ENCODE measurements at regions of chr16 and their contacts with region 1.

Region 1: DNA sequence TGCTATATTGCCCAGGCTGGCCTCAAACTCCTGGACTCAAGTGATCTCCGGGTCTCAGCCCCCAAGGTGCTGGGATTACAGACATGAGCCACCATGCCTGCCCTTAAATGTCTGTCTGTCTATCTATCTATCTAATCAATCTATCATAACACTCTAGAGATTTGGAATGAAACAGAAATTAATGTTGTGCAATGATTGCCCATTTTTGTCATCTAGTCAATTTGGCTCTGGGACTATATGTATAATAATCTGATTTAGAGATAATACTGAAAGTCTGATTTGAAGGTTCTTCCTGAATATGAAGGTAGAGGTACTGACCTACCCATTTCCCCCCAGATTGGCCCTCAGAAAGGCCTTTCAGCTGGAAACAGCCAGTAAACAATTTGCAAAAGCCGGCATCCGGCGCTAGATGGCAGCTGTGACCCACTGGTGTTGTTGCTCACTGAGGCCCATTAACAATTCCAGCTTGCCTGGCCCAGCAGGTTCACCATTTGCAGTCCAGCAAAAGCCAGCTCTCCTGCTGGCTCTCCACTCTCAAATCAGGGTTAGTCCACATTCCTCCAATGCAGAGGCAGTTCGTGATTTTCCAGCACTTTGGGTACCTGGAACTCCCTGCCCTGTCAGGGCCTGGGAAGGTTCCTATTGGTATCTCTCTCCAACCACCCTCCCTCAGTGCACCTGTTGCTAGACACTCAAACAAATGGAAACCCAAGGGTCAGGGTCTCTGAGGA is 22.9 kb upstream of the C16orf87 start:
- DNase-seq: peak; percentile 81
- ATAC-seq: peak; percentile 86
- H3K4me3 ChIP-seq: no peak overlapping the region
- H3K27ac ChIP-seq: no peak overlapping the region
- H3K4me1 ChIP-seq: peaks cover 75% of the 10 kb centered on the region
- H3K27me3 ChIP-seq: no peaks in the 10 kb centered on the region
- CTCF ChIP-seq: peak; percentile 99
- EP300 ChIP-seq: no peak; a peak in 1 of 4 replicates
- POLR2A ChIP-seq: no peak
- RAD21 ChIP-seq: peak; percentile 99

Region 2: GRCh38 chr16:46632778-46633733 is 220.8 kb before region 1 on chr16:
- CTCF ChIA-PET with region 1: no interaction called
- POLR2A ChIA-PET with region 1: no interaction called
- in situ Hi-C with region 1: no loop called
- intact Hi-C with region 1: no loop called
- DNase-seq: peak; percentile 87
- ATAC-seq: peak; percentile 92
- H3K4me3 ChIP-seq: peak overlapping the region; percentile 51 to 71 (median 69)
- H3K27ac ChIP-seq: peak overlapping the region; percentile 0
- H3K4me1 ChIP-seq: peaks cover 39% of the 10 kb centered on the region
- H3K27me3 ChIP-seq: peaks cover 0 to 4% of the 10 kb centered on the region in 2 experiments; a peak in 2 of 5 replicates
- CTCF ChIP-seq: peak; percentile 64
- EP300 ChIP-seq: no peak
- POLR2A ChIP-seq: peak; percentile 90 to 96
- RAD21 ChIP-seq: no peak

Region 3: GRCh38 chr16:46774743-46775177 is 79.1 kb before region 1 on chr16:
- CTCF ChIA-PET with region 1: no interaction called
- POLR2A ChIA-PET with region 1: no interaction called
- in situ Hi-C with region 1: no loop called
- intact Hi-C with region 1: no loop called
- DNase-seq: no peak
- ATAC-seq: no peak
- H3K4me3 ChIP-seq: no peak overlapping the region
- H3K27ac ChIP-seq: no peak overlapping the region
- H3K4me1 ChIP-seq: peaks cover 14% of the 10 kb centered on the region
- H3K27me3 ChIP-seq: peaks cover 0 to 5% of the 10 kb centered on the region in 2 experiments; a peak in 1 of 5 replicates
- CTCF ChIP-seq: no peak
- EP300 ChIP-seq: no peak
- POLR2A ChIP-seq: no peak
- RAD21 ChIP-seq: no peak

Region 4: DNA sequence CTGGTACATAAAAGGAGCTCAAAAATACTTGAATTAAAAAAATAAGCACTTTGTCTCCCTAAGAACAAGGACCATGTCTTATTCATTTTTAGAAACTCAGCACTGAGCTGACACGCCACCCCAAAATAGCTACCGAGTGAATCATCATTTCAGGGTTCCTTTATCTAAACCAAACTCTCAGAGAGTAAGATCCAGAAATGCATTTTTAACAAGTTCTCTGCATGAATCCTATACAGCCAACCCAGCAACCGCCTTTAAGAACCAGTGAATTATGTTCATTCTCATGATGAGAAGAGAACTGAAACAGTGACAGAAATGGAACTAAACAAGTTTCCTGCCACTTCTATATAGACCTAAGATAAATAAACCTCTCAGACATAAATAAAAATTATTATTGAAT is 31.6 kb before region 1 on chr16:
- CTCF ChIA-PET with region 1: no interaction called
- POLR2A ChIA-PET with region 1: no interaction called
- in situ Hi-C with region 1: no loop called
- intact Hi-C with region 1: no loop called
- DNase-seq: no peak
- ATAC-seq: no peak
- H3K4me3 ChIP-seq: no peak overlapping the region
- H3K27ac ChIP-seq: no peak overlapping the region
- H3K4me1 ChIP-seq: peaks cover 18% of the 10 kb centered on the region
- H3K27me3 ChIP-seq: no peaks in the 10 kb centered on the region
- CTCF ChIP-seq: no peak
- EP300 ChIP-seq: no peak
- POLR2A ChIP-seq: no peak
- RAD21 ChIP-seq: no peak

Region 5: GRCh38 chr16:46896314-46896968 is 42.6 kb after region 1 on chr16:
- CTCF ChIA-PET with region 1: interaction called, 4 read pairs
- POLR2A ChIA-PET with region 1: interaction called, 17 read pairs
- in situ Hi-C with region 1: no loop called
- intact Hi-C with region 1: no loop called
- DNase-seq: no peak
- ATAC-seq: peak; percentile 7; the same call in 2 of the 3 replicates
- H3K4me3 ChIP-seq: peak overlapping the region in 1 of 3 experiments; percentile 15; a peak in 1 of 6 replicates
- H3K27ac ChIP-seq: peak overlapping the region; percentile 80
- H3K4me1 ChIP-seq: peaks cover 79% of the 10 kb centered on the region
- H3K27me3 ChIP-seq: no peaks in the 10 kb centered on the region
- CTCF ChIP-seq: no peak
- EP300 ChIP-seq: no peak
- POLR2A ChIP-seq: peak in 1 of 2 experiments; percentile 10; a peak in 1 of 4 replicates
- RAD21 ChIP-seq: no peak

Region 6: DNA sequence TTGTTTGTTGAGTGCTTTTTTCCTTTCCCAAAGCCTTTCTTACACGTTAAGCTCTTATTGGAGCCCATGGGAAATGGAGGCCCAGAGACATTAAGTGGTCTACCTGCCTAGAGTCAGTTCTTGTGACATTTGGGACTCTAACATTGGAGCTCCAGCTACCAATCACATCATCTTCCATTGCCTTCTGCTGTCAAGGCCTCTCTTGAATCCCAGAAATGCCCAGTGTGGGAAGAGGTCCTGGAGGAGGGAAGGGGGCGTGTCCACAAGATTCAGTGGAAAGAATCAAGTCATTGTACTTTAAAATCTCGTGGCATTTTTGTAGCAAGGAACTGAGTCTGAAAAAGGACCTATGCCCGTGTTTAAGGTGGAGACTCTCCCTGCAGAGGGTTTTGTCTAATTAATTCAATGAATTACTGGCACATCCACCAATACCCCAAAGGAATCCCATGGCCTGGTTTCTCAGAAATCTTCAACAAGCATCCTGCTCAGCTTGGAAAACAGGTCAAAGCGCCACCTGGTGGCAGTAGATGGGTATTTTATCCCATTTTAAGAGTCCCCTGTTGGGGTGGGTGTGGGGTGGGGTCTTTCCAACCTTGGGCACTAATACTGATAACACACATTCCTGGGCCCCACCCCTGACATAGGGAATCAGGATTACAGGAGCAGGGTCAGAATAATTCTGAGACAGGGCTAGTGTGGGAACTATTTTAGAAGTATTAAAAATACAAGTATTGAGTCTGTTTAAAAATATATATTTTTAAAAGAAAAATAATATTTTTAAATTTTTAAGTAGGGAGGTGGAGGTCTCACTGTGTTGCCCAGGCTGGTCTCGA is 54.9 kb after region 1 on chr16:
- CTCF ChIA-PET with region 1: interaction called, 91 read pairs
- POLR2A ChIA-PET with region 1: interaction called, 14 read pairs
- in situ Hi-C with region 1: loop called (anchors 5 kb)
- intact Hi-C with region 1: loop called (anchors 1 kb)
- DNase-seq: peak; percentile 71
- ATAC-seq: peak; percentile 36
- H3K4me3 ChIP-seq: no peak overlapping the region
- H3K27ac ChIP-seq: no peak overlapping the region
- H3K4me1 ChIP-seq: peaks cover 28% of the 10 kb centered on the region
- H3K27me3 ChIP-seq: no peaks in the 10 kb centered on the region
- CTCF ChIP-seq: peak; percentile 71
- EP300 ChIP-seq: no peak
- POLR2A ChIP-seq: no peak
- RAD21 ChIP-seq: peak; percentile 65

Region 7: DNA sequence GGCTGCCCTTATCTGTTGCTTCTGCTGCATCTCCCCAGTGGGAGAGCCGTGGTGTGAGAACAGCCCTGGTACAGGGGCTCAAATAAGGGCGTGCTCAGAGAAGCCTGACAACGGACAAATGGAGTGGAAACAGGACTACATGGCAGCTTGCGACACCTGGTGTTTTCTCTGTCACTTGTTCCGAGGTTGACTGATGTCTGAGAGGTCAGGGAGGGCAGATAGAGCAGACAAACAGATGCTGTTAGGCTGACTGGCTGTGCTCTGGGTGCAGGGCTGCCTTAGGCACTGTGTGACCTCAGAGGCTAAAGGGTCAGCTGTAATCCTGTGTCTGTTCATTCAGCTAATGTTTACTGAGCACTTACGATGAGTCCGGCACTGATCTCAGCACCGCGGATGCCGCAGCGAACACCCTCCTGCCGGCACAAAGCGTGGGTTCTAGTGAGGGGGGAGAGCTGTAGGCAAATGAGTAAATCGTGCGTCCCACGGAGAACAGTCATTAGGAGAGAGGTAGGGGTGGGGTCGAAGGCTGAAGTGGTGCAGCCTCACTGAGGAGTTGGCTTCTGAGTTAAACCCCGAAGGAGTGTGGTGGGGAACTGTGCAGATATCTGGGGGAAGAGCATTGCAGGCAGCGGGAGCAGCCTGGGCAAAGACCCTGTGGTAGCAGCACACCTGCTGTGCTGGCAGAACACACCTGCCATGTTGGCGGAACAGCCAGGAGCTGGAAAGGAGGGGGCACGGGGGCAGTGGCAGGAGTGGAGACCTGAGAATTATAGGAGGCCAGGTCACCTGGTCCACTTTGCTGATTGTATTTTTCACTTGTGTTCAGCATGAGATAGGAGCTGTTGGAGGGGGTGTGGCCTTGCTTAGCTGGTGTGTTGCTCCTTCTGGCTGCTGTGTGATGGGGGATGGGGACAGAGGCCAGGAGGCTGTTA is 65.2 kb after region 1 on chr16:
- CTCF ChIA-PET with region 1: interaction called, 4 read pairs
- POLR2A ChIA-PET with region 1: interaction called, 12 read pairs
- in situ Hi-C with region 1: no loop called
- intact Hi-C with region 1: loop called (anchors 2 kb)
- DNase-seq: peak; percentile 97
- ATAC-seq: peak; percentile 88
- H3K4me3 ChIP-seq: no peak overlapping the region
- H3K27ac ChIP-seq: peak overlapping the region; percentile 43
- H3K4me1 ChIP-seq: peaks cover 56% of the 10 kb centered on the region
- H3K27me3 ChIP-seq: no peaks in the 10 kb centered on the region
- CTCF ChIP-seq: peak; percentile 96
- EP300 ChIP-seq: peak; percentile 64 to 67; a peak in 2 of 4 replicates
- POLR2A ChIP-seq: peak in 1 of 2 experiments; percentile 16; a peak in 2 of 4 replicates
- RAD21 ChIP-seq: peak; percentile 72; the same call in 1 of the 2 replicates

Region 8: DNA sequence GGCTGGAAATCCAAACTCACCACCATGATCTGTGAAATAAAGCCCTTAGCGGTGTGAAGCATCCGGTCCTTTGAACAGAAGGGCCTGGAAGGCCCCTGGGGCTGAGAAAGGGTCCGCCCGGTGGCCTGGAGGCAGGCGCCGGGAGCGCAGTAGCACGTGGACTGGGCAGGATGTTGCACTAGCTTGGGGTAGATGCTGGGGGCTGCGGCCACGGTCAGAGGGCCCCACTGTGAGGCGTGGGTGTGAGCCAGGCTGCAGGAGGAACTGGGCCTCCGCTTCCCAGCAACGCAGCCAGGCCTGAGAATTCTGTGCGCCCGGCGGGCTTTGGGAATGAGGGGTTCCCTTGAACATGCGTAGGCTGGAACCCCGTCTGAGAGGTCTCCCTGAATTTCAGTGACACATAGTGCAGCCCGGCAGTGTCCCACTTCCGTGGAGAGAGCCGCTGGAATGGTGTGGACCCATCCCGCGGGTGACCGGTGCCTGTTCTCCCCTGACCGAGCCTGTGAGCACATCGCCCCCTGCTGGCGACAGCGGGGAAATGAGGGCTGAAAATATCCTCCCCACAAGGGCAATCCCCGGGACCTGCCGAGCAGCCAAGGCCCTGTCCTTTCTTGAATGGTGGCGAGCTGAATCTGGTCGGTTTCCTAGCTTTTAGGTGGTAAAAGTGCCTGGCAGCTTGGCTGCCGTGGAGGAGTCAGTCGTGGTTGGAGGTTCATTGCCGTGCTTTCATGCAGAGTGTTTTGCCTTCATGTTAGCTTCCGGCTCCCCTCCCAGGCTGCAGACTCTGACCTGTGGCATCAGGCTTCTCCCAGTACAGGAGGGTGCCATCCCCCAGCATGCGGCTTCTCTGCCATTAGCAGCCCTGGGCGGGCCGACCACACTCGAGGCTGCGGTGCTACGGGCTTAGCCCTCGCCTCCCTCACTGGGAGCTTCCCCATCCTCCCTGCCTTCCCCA is 75.8 kb after region 1 on chr16:
- CTCF ChIA-PET with region 1: interaction called, 23 read pairs
- POLR2A ChIA-PET with region 1: interaction called, 4 read pairs
- in situ Hi-C with region 1: no loop called
- intact Hi-C with region 1: loop called (anchors 1 kb)
- DNase-seq: peak; percentile 60
- ATAC-seq: peak; percentile 65
- H3K4me3 ChIP-seq: no peak overlapping the region
- H3K27ac ChIP-seq: no peak overlapping the region
- H3K4me1 ChIP-seq: peaks cover 10% of the 10 kb centered on the region
- H3K27me3 ChIP-seq: no peaks in the 10 kb centered on the region
- CTCF ChIP-seq: peak; percentile 94
- EP300 ChIP-seq: no peak
- POLR2A ChIP-seq: peak in 1 of 2 experiments; percentile 47; a peak in 1 of 4 replicates
- RAD21 ChIP-seq: peak; percentile 80

Measured in HepG2 (cell line).